Endothelial cell of umbilical vein (primary cell): ENCODE measurements at regions of chr9 and their contacts with region 1.

Region 1: DNA sequence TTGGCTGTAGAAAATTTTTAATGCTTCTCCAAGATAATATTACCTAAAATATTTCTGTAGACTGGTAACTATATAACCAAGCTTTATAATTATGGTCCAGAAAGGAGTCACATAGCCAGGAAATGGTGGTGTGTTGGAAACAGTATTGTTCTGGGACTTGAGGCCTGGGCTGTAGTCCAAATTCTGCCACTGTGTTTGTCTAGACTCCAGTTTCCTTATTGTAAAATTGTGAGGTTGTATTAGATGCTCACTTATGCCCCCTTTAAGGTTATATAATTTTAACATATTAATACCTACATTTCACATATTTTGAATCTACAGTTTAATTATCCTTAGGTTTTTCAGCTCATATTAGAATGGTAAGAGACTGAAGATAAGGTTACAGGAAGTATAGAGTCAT is 42.4 kb downstream of the STX17 start:
- DNase-seq: peak; percentile 92
- H3K4me3 ChIP-seq: no peak overlapping the region
- H3K27ac ChIP-seq: peak overlapping the region; percentile 55
- H3K4me1 ChIP-seq: peaks cover 7% of the 10 kb centered on the region
- H3K27me3 ChIP-seq: no peaks in the 10 kb centered on the region
- CTCF ChIP-seq: no peak
- POLR2A ChIP-seq: no peak

Region 2: GRCh38 chr9:99906403-99907207 is 42.3 kb before region 1 on chr9 and contains the start of gene STX17:
- CTCF ChIA-PET with region 1: interaction called, 5 read pairs
- POLR2A ChIA-PET with region 1: no interaction called
- dilution Hi-C with region 1: no loop called
- intact Hi-C with region 1: loop called (anchors 2 kb)
- DNase-seq: peak; percentile 77
- H3K4me3 ChIP-seq: peak within 1 kb of the TSS; percentile 68 to 90 (median 70)
- H3K27ac ChIP-seq: peak within 1 kb of the TSS; percentile 86
- H3K4me1 ChIP-seq: peaks cover 3% of the 10 kb centered on the region
- H3K27me3 ChIP-seq: no peaks in the 10 kb centered on the region
- CTCF ChIP-seq: no peak
- POLR2A ChIP-seq: peak; percentile 67
- total RNA-seq, gene STX17: 14.8 and 17.6 TPM in 2 replicates

Region 3: DNA sequence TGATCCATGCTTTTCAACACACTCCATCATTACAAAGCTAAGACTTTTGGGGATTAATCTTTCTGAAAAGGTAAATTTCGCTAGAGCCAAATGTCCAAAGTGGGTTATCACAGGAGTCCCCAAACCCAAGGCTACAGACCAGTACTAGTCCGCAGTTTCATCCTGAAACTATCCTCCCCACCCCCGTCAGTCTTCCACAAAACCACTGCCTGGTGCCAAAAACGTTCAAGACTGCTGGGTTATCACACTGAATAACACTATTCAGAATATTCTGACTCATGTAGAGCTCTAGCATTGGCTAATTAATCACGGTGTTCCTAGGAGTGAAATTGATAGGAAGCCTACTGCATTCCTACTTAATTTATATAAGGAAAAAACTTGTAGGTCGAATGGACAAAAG is 125.2 kb after region 1 on chr9:
- CTCF ChIA-PET with region 1: no interaction called
- POLR2A ChIA-PET with region 1: no interaction called
- dilution Hi-C with region 1: no loop called
- intact Hi-C with region 1: no loop called
- DNase-seq: no peak
- H3K4me3 ChIP-seq: no peak overlapping the region
- H3K27ac ChIP-seq: no peak overlapping the region
- H3K4me1 ChIP-seq: no peaks in the 10 kb centered on the region
- H3K27me3 ChIP-seq: no peaks in the 10 kb centered on the region
- CTCF ChIP-seq: no peak
- POLR2A ChIP-seq: no peak